ENCODE measurements at regions of chr17 and their contacts with region 1.

Region 1: DNA sequence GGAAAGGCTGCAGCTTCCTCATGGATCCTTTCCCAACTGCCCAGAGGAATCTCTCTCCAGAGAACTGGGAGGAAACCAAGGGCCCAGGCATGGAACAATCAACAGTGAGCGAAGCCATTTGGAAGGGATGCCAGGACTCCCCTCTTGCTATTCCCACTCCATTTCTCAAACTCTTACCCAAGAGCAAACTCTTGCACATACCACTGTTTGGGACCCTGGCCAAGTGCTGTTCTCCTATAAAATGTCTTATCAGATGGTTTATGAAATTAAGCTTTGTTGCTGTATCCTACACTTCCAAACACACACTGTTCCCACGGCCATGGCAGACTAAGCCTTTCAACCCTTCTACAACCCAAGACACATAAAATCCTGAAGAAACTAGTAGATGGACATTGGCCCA is 48.3 kb upstream of the AXIN2 start:
- DNase-seq: no peak
- H3K4me3 ChIP-seq: no peak overlapping the region
- H3K27ac ChIP-seq: no peak overlapping the region
- H3K4me1 ChIP-seq: no peaks in the 10 kb centered on the region
- H3K27me3 ChIP-seq: no peaks in the 10 kb centered on the region
- CTCF ChIP-seq: no peak

Region 2: GRCh38 chr17:65294179-65294720 is 315.5 kb before region 1 on chr17:
- CTCF ChIA-PET with region 1: interaction called, 10 read pairs
- POLR2A ChIA-PET with region 1: no interaction called
- intact Hi-C with region 1: no loop called
- DNase-seq: peak; percentile 32 to 40
- H3K4me3 ChIP-seq: no peak overlapping the region
- H3K27ac ChIP-seq: no peak overlapping the region
- H3K4me1 ChIP-seq: no peaks in the 10 kb centered on the region
- H3K27me3 ChIP-seq: no peaks in the 10 kb centered on the region
- CTCF ChIP-seq: peak; percentile 77

Region 3: GRCh38 chr17:65588176-65588808 is 21.5 kb before region 1 on chr17:
- CTCF ChIA-PET with region 1: no interaction called
- POLR2A ChIA-PET with region 1: no interaction called
- intact Hi-C with region 1: no loop called
- DNase-seq: peak; percentile 57 to 90
- H3K4me3 ChIP-seq: no peak overlapping the region
- H3K27ac ChIP-seq: no peak overlapping the region
- H3K4me1 ChIP-seq: peaks cover 28% of the 10 kb centered on the region
- H3K27me3 ChIP-seq: no peaks in the 10 kb centered on the region
- CTCF ChIP-seq: peak; percentile 56